ENCODE measurements at regions of chr17 and their contacts with region 1.

Region 1: DNA sequence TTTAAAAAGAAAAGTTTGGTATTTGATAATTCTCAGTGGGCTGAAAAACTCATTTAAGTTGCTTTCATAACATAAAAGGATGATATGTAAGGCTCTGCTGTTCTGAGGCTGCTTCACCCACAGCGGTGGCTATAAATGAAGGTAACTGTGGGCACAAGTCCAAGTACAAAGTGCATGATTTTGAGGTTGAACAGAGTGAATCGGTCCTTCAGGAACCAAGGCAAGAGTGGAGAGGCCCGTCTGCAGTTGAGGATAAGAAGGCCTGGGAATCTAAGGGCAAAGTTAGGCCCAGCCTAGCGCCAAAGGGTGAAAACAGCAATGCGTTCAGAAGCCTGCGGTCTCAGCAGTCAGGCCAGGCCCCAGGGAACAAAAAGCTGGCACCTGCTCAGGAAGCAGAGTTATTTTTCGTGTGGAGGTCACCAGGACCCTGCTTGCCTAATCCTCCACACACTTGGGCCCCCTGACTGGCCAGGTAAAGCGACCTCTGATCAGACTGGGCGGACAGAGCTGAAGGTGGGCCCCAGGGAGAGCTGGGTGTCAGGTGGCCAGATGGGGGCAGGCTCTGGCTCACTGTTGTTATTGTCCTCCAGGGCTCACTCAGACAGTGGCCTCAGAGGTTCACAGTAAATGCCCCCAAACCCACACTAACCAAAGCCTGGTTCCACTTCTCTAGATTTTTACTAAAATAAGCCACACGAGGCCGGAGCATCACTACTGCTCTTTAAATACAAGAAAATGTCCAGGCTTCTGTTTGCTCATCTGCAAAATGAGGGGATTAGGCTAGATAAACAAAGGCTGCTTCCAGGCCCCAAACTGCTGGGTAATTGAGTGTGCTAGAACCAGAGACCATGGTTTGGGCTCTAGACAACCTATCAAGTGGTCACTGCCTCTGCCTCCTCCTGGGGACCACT is 46.5 kb downstream of the TEX2 start:
- DNase-seq: peak; percentile 94
- ATAC-seq: peak; percentile 99
- H3K4me3 ChIP-seq: peak overlapping the region; percentile 40 to 68 (median 55)
- H3K27ac ChIP-seq: peak overlapping the region; percentile 97
- H3K4me1 ChIP-seq: peaks cover 48% of the 10 kb centered on the region
- H3K27me3 ChIP-seq: no peaks in the 10 kb centered on the region
- CTCF ChIP-seq: peak; percentile 93
- EP300 ChIP-seq: peak; percentile 50 to 85; a peak in 3 of 4 replicates
- POLR2A ChIP-seq: peak; percentile 70 to 75; a peak in 3 of 4 replicates
- RAD21 ChIP-seq: peak; percentile 84; the same call in 1 of the 2 replicates

Region 2: DNA sequence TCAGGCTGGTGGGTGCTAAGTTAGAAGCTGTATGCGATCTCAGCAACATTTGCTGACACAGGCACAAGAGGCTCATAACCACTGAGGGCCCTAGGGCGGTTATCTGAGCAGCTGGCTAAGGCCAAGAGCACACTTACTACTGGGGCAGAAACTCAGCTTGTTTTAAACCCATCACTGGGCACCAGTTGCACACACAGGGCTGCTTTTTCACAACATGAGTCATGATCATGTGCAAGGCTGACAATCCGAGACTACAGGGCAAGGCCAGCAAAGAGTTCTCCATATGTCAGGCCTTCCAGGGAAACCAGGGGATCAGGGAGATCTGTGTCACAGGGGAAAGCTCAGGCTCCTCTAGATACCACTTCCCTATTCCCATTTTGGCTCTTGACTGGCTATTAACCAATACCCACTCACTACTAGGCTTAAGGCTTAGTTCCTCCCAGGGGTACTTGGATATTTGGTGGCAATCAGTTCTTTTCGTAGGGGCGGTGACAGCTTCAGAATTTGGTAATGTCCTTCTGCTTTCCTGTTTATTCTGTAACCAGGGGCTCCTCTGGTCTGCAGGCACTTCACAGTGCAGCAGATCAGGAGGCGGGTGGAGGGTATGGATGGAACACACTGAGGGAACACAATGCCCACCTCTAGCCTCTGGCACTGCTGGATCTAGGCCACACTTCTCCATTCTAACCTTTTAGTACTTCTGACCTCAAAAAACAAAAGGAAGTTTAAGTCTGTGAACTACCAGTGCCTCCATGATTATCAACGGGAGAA is 41.7 kb before region 1 on chr17:
- CTCF ChIA-PET with region 1: no interaction called
- POLR2A ChIA-PET with region 1: interaction called, 28 read pairs
- in situ Hi-C with region 1: no loop called
- intact Hi-C with region 1: no loop called
- DNase-seq: no peak
- ATAC-seq: no peak
- H3K4me3 ChIP-seq: no peak overlapping the region
- H3K27ac ChIP-seq: no peak overlapping the region
- H3K4me1 ChIP-seq: peaks cover 37% of the 10 kb centered on the region
- H3K27me3 ChIP-seq: no peaks in the 10 kb centered on the region
- CTCF ChIP-seq: no peak
- EP300 ChIP-seq: no peak
- POLR2A ChIP-seq: no peak
- RAD21 ChIP-seq: no peak

Region 3: GRCh38 chr17:64202675-64203344 is 13.8 kb before region 1 on chr17:
- CTCF ChIA-PET with region 1: no interaction called
- POLR2A ChIA-PET with region 1: interaction called, 23 read pairs
- in situ Hi-C with region 1: no loop called
- intact Hi-C with region 1: no loop called
- DNase-seq: peak; percentile 55
- ATAC-seq: peak; percentile 85
- H3K4me3 ChIP-seq: no peak overlapping the region
- H3K27ac ChIP-seq: no peak overlapping the region
- H3K4me1 ChIP-seq: peaks cover 48% of the 10 kb centered on the region
- H3K27me3 ChIP-seq: no peaks in the 10 kb centered on the region
- CTCF ChIP-seq: peak; percentile 63
- EP300 ChIP-seq: no peak; a peak in 1 of 4 replicates
- POLR2A ChIP-seq: no peak
- RAD21 ChIP-seq: no peak

Region 4: DNA sequence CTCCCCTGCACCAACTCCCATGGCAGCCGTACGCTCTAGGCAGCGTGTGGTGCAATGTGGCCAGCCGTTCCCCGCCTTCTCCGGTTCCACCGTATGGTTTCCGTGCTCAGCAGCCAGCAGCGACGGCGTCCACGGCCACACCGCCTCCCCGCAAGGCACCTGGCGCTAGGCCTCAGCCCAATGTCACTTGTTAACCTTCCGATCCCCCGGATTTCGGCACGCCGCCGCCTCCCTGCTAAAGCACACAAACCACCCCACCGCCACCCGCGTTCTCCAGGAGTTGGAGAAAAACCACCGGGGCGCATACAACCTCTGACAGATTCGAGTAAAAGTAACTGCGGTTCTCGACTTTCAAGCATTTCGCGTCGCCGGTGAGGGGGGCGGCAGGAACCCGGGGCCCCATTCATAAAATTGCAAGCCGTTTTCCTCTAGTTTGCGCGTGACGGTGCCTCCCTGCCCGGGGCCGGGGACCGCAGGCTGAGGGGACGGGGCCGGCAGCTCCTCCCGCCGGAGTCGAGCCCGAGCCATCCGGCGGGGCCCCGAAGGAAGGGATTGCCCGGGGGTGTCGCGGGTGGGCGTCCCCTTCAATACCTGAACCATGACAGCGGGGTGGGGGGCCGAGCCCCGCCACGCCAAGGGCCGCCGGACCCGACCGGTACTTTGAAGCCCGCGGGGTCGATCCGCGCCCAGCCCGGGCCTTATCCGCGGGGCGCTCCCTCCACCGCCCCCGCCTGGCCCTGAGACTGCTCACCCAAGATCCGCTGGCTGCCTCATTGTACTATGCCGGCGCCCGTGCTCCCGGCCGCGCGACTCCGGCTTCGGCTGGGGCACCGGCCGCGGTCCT is 46.0 kb after region 1 on chr17 and contains the start of gene TEX2:
- CTCF ChIA-PET with region 1: no interaction called
- POLR2A ChIA-PET with region 1: interaction called, 17 read pairs
- in situ Hi-C with region 1: no loop called
- intact Hi-C with region 1: loop called (anchors 5 kb)
- DNase-seq: peak; percentile 39
- ATAC-seq: peak; percentile 73
- H3K4me3 ChIP-seq: peak within 1 kb of the TSS; percentile 92 to 96 (median 92)
- H3K27ac ChIP-seq: peak within 1 kb of the TSS; percentile 82
- H3K4me1 ChIP-seq: peaks cover 57% of the 10 kb centered on the region
- H3K27me3 ChIP-seq: no peaks in the 10 kb centered on the region; a peak in 2 of 5 replicates
- CTCF ChIP-seq: no peak; the same call in none of the 2 replicates
- EP300 ChIP-seq: no peak
- POLR2A ChIP-seq: peak; percentile 43 to 72
- RAD21 ChIP-seq: peak; percentile 34; the same call in 1 of the 2 replicates
- total RNA-seq, gene TEX2: 33.6 and 37.7 TPM in 2 replicates